Activated CD4-positive, alpha-beta T cell treated with anti-CD3 and anti-CD28 coated beads, Interleukin-2, amount 10 ng/mL, durations not matched to agents 24 days and 14 days (primary cell): ENCODE measurements at regions of chr14 and their contacts with region 1.

Region 1: GRCh38 chr14:94448071-94448808 is 4.4 kb downstream of the SERPINA11 start:
- DNase-seq: no peak
- H3K4me3 Mint-ChIP-seq: no peak overlapping the region
- H3K27ac Mint-ChIP-seq: no peak overlapping the region
- H3K4me1 Mint-ChIP-seq: no peaks in the 10 kb centered on the region
- H3K27me3 Mint-ChIP-seq: peaks cover 17% of the 10 kb centered on the region

Region 2: GRCh38 chr14:93566065-93566693 is 882.1 kb before region 1 on chr14:
- intact Hi-C with region 1: loop called (anchors 10 kb)
- DNase-seq: no peak
- H3K4me3 Mint-ChIP-seq: no peak overlapping the region
- H3K27ac Mint-ChIP-seq: no peak overlapping the region
- H3K4me1 Mint-ChIP-seq: no peaks in the 10 kb centered on the region
- H3K27me3 Mint-ChIP-seq: no peaks in the 10 kb centered on the region

Region 3: DNA sequence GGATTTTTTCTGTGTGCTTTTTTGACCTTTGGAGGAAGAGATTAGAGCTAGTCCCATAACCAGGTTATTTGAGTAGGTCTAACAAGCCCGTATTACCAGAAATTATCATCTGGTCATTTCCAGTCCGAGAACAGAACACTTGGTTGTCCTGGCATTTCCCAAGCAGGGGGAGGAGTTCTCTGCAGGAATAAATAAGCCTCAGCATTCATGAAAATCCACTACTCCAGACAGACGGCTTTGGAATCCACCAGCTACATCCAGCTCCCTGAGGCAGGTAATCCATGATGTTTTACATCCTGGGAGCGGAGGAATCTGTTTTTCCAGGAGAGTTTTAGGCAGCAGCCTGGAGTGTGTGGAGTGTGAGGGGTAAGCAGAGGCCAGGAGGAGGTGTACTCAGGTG is 163.9 kb after region 1 on chr14 and contains the start of gene SERPINA3:
- intact Hi-C with region 1: no loop called
- DNase-seq: no peak
- H3K4me3 Mint-ChIP-seq: no peak within 1 kb of the TSS
- H3K27ac Mint-ChIP-seq: no peak within 1 kb of the TSS
- H3K4me1 Mint-ChIP-seq: no peaks in the 10 kb centered on the region
- H3K27me3 Mint-ChIP-seq: no peaks in the 10 kb centered on the region
- total RNA-seq, gene SERPINA3: not detected in 2 replicates